ENCODE measurements at regions of chrX and their contacts with region 1.

Region 1: DNA sequence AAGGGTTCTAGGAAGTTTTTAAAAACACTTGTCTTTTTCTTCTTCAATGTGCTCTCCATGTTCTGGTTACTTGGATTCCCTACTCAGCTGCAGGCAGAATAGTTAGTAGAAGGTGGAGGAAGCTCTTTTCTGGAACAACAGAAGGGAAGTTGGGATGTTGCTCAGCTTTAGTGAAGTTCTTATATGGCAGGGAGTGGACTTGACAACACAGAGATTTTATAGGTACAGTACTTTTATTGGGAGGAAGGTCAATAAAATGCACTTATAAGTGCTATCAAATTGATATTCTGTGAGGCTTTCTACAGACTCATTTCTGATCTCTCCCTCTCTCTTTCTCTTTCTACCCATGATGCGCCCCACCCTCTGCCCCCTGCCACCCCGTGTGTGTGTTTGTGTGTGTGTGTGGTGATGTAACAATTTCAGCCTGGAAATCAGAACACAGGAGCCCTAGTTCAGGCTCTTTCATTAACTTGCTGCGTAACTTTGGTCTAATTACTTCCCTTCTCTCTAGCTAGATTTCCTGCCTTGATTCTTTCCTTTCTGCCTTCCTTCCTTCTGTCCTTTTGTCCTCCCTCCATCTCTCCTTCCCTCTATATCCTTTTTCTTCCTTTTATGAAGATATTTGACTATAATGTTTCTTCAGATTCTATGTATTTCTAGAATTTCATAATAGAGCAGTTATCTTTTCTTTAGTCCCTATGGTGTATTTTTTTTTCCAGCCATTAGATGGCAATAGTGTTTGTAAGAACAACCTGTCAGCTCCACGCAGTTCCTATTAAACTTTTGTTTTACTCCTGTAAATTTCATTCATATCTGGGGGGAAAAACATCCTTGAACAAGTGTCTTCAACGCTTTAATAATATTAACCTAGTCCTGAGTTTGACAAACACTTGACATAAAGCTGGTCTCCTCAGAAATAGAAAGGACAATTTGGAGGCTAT is 37.1 kb downstream of the HEPH start:
- H3K4me3 Mint-ChIP-seq: no peak overlapping the region
- H3K27ac Mint-ChIP-seq: no peak overlapping the region
- H3K4me1 Mint-ChIP-seq: peaks cover 22% of the 10 kb centered on the region
- H3K27me3 Mint-ChIP-seq: peaks cover 1% of the 10 kb centered on the region

Region 2: DNA sequence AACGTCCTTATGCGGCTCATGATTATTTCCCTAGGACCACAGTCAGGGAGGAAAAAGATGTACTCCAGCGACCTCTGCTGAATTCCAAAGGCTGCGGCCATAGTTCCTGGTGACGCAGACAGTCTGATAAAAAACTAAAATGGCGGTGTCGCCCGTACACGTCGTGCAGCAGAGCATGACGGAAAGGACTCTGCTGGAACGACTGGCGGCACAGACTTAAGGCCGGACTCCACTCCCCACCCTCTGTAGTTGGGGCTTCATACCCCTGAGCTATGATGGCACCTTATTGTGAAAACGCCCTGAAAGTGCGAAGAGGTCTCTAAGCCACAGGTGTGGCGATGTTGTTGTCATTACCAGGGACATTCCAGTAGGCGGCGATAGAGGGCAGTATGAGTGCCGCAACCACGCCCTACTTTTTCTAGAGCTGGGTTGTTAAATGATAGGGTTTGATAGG is 527.7 kb after region 1 on chrX:
- intact Hi-C with region 1: loop called (anchors 5 kb)
- H3K4me3 Mint-ChIP-seq: peak overlapping the region; percentile 78
- H3K27ac Mint-ChIP-seq: peak overlapping the region; percentile 66
- H3K4me1 Mint-ChIP-seq: no peaks in the 10 kb centered on the region
- H3K27me3 Mint-ChIP-seq: no peaks in the 10 kb centered on the region